Posterior vena cava (tissue), 2 donors: ENCODE measurements at regions of chr16 and their contacts with region 1.

Region 1: DNA sequence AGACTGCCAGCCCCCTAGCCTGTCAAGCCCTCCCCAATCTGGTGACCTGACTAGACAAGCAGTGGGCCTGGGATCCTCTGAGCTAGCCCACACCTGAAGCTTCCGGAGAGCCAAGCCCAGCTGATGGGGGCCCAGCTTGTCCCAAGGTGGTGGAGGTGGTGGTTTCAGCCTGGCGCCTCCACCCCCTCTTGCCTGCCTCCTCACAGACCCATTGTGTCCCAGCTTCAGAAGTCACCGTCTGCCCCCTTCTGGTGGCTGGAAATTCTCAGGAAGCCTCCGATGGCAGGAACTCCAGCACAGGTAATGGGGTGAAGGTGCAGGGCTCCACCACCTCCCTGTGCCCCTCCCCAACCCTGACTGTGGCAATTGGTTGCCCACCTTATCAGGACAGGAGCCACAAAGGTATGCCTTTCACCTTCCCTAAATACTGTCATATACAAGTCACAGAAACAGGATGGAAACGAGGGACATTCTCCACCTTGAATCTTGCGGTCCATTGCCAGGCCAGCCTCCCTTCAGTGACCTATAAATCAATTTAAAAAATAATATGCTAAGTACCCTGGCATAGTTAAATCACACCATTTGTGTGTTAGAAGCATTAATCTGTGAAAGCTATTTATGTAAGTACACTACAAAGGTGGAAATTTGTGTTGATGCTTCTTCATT is 66.0 kb upstream of the ZNF423 start:
- DNase-seq: peak; percentile 84

Region 2: GRCh38 chr16:49407873-49408550 is 513.9 kb before region 1 on chr16:
- intact Hi-C with region 1: loop called in 1 of 2 experiments (anchors 5 kb)
- DNase-seq: peak; percentile 94

Region 3: GRCh38 chr16:49605536-49606254 is 316.2 kb before region 1 on chr16:
- intact Hi-C with region 1: loop called in 1 of 2 experiments (anchors 2 kb)
- DNase-seq: no peak

Region 4: DNA sequence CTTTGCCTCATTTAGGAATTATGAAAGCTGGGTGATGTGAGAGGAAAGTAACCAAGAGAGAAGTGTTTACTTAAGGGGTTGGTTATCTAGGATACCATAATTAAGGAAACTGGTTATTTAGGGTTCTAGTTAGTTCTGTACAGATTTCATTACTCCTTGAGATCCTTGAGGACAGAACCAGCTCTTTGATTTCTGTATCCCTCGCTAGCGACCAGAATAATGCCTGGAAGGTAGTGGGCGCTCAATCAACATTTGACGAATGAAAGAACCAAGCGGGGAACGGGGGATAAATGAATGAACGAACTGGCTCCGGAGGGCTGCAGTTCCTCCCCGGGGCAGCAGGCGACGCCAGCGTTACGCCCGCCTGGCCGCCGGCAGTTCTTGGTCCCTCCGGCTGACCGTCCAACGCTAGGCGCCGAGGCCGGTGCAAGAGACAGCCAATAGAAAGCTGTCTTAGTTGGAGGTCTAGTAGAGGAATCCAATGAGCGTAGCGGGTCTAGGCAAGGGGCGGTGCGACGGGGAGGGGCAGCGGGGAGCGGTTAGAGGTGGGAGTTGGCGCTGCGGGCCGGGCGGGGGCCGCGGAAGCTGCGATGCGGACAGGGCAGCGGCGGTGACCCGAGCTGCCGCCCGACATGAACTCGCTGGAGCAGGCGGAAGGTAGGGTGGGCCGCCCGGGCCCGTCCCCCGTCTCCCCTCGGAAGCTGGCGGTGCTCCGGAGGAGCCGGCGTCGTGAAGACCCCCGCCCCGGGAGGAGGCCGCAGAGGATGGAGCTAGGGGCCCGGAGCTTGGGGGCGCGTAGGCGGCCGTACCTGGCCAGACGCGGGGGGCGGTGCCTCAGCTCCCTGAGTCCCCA is 103.0 kb after region 1 on chr16 and contains the start of gene CNEP1R1:
- intact Hi-C with region 1: no loop called
- DNase-seq: peak; percentile 98
- total RNA-seq, gene CNEP1R1: 18.6 to 22.2 TPM

Region 5: DNA sequence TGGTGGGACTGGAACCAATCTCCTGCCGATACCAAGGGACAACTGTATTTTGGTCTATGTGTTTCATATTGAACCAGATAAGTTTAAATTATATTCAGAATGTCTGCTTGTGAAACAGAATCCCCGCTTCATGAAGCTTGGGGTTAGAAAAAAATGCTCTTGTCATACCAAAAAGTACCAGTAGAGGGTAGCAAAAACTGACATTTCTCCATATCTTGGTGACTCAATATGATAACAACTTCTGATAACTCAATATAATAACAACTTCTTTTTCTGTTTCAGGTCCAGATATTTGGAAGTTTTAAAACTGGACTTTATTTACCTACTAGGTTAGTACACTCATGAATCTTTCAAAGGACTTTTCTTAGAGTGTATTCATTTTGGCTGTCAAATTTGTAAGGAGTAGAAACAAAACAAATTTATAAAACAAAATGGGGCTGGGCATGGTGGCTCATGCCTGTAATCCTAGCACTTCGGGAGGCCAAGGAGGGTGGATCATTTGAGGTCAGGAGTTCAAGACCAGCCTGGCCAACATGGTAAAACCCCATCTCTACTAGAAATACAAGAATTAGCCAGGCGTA is 292.1 kb after region 1 on chr16:
- intact Hi-C with region 1: no loop called
- DNase-seq: no peak